Tibial artery (tissue), 4 donors: ENCODE measurements at regions of chr22 and their contacts with region 1.

Region 1: DNA sequence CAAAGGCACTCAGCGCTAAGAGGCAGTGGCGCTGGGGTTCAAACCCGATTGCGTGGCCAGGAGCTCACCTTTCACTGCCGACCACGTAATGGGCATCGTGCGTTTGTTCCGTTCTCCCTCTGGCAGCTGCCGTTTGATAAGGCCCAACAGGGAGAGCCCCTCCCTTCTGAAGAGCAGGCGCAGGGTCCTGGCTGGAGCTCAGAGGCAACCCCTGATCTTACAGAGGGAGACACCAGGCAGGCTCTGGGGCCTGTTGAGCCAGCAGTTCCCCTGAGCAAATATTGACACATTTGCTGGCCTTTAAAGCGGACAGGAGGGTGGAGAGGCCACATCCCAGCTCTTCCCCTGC is 11.7 kb upstream of the C1QTNF6 start:
- DNase-seq: no peak
- H3K4me3 ChIP-seq: peak overlapping the region; percentile 61 to 68
- H3K27ac ChIP-seq: peak overlapping the region; percentile 84 to 87
- H3K4me1 ChIP-seq: peaks cover 7 to 34% (median 24%) of the 10 kb centered on the region in 4 donors
- H3K27me3 ChIP-seq: no peaks in the 10 kb centered on the region
- CTCF ChIP-seq: no peak

Region 2: GRCh38 chr22:37032546-37033460 is 166.9 kb before region 1 on chr22:
- intact Hi-C with region 1: loop called (anchors 10 kb)
- DNase-seq: peak in 1 of 2 donors; percentile 33
- H3K4me3 ChIP-seq: no peak overlapping the region
- H3K27ac ChIP-seq: no peak overlapping the region
- H3K4me1 ChIP-seq: peaks cover 0 to 3% (median 0%) of the 10 kb centered on the region in 4 donors
- H3K27me3 ChIP-seq: peaks cover 0 to 20% of the 10 kb centered on the region in 2 donors
- CTCF ChIP-seq: no peak

Region 3: GRCh38 chr22:37166675-37167066 is 33.1 kb before region 1 on chr22:
- intact Hi-C with region 1: loop called (anchors 2 kb)
- DNase-seq: peak; percentile 77 to 90
- H3K4me3 ChIP-seq: no peak overlapping the region
- H3K27ac ChIP-seq: no peak overlapping the region
- H3K4me1 ChIP-seq: peaks cover 0 to 7% (median 4%) of the 10 kb centered on the region in 4 donors
- H3K27me3 ChIP-seq: peaks cover 0 to 40% of the 10 kb centered on the region in 2 donors
- CTCF ChIP-seq: peak; percentile 88 to 89

Region 4: GRCh38 chr22:37498289-37498909 is 298.7 kb after region 1 on chr22:
- intact Hi-C with region 1: no loop called
- DNase-seq: no peak
- H3K4me3 ChIP-seq: no peak overlapping the region
- H3K27ac ChIP-seq: no peak overlapping the region
- H3K4me1 ChIP-seq: peaks cover 0 to 17% (median 9%) of the 10 kb centered on the region in 4 donors
- H3K27me3 ChIP-seq: peaks cover 0 to 45% of the 10 kb centered on the region in 2 donors
- CTCF ChIP-seq: no peak